Panc1 (cell line): ENCODE measurements at regions of chr5 and their contacts with region 1.

Region 1: DNA sequence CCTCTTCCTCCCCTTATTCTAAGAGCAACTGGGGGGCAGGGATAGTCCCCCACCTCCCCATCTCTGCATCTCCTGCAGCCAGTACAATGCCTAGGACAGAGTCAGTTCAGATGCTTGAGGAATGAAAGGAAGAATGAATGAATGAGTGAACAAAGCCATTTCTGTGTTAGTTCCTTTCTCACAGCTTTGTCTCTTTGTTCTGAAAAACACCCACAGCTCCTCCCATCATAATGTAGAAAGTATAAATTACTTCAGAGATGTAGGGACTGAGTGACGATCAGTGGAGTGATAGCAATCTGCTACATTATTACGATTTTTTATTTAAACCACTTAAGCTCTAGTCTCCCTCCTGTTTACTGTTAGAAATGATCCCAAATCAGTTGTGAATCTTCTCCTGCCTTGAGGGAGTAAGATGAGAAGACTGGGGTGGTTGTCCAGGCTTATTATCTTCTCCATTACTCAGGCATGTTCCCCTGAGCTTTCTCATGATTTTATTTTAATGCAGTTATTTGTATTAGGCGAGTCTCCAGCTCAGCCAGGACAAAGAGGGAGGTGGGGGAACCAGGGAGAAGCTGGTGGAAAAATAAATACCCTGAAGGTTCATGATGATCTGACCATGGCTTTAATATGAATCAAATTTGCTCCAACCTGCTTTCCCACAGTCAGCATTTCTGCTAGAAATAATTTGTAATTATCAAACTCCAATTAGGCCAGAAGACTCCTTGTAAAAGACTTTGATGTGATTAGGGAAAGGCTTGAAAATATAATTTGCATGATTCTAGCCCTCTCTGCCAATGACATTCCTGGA is 48.2 kb upstream of the CTNNA1 start:
- DNase-seq: no peak
- ATAC-seq: no peak
- H3K4me3 ChIP-seq: no peak overlapping the region
- H3K27ac ChIP-seq: no peak overlapping the region
- H3K4me1 ChIP-seq: 0 out of 2 replicates have a peak, but pooled peaks cover 3% of the 10 kb centered on the region
- H3K27me3 ChIP-seq: no peaks in the 10 kb centered on the region
- CTCF ChIP-seq: no peak

Region 2: DNA sequence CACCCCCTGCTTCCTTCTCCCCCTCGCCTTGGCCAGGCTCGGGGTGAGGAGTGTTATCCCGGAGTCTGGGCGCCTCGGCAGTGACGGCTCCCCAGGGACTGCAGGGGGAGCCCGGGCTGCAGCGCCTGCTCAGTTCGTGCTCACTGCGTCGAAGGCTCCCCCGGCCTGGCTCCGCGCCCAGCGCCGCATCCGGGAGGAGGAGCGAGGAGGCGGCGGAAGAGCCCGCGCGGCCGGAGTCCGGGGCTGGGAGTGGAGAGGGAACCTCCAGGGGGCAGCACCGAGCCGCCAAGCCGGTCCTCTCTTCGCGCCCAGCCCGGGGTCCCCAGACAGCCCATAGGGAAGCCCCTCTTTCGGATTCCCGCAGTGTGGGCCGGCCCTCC is 241.0 kb before region 1 on chr5:
- CTCF ChIA-PET with region 1: no interaction called
- POLR2A ChIA-PET with region 1: no interaction called
- in situ Hi-C with region 1: no loop called
- intact Hi-C with region 1: no loop called
- DNase-seq: peak; percentile 69
- ATAC-seq: peak; percentile 78
- H3K4me3 ChIP-seq: peak overlapping the region; percentile 81 to 87
- H3K27ac ChIP-seq: peak overlapping the region; percentile 97
- H3K4me1 ChIP-seq: peaks cover 5% of the 10 kb centered on the region; the same call in 1 of the 2 replicates
- H3K27me3 ChIP-seq: no peaks in the 10 kb centered on the region
- CTCF ChIP-seq: peak; percentile 99

Region 3: GRCh38 chr5:139335811-139336210 is 630.8 kb after region 1 on chr5:
- CTCF ChIA-PET with region 1: no interaction called
- POLR2A ChIA-PET with region 1: interaction called, 11 read pairs
- in situ Hi-C with region 1: no loop called
- intact Hi-C with region 1: no loop called
- DNase-seq: no peak
- ATAC-seq: 0 out of 2 replicates have a peak, but pooled peaks have one; percentile 25
- H3K4me3 ChIP-seq: no peak overlapping the region
- H3K27ac ChIP-seq: no peak overlapping the region
- H3K4me1 ChIP-seq: 0 out of 2 replicates have a peak, but pooled peaks cover under 1% of the 10 kb centered on the region
- H3K27me3 ChIP-seq: no peaks in the 10 kb centered on the region
- CTCF ChIP-seq: no peak